Dendritic cell treated with granulocyte-macrophage colony-stimulating factor and Interleukin-4, amounts not matched to agents 40 ng/mL and 50 ng/mL, for 4 days (primary cell): ENCODE measurements at regions of chr1 and their contacts with region 1.

Region 1: GRCh38 chr1:43529206-43529731 is 1.4 kb upstream of the PTPRF start:
- H3K4me3 Mint-ChIP-seq: no peak overlapping the region
- H3K27ac Mint-ChIP-seq: no peak overlapping the region
- H3K4me1 Mint-ChIP-seq: peaks cover 13% of the 10 kb centered on the region
- H3K27me3 Mint-ChIP-seq: peaks cover 56% of the 10 kb centered on the region

Region 2: GRCh38 chr1:43423672-43424550 is 105.4 kb before region 1 on chr1:
- intact Hi-C with region 1: no loop called
- H3K4me3 Mint-ChIP-seq: no peak overlapping the region
- H3K27ac Mint-ChIP-seq: no peak overlapping the region
- H3K4me1 Mint-ChIP-seq: no peaks in the 10 kb centered on the region
- H3K27me3 Mint-ChIP-seq: no peaks in the 10 kb centered on the region

Region 3: GRCh38 chr1:43650310-43651085 is 121.2 kb after region 1 on chr1:
- intact Hi-C with region 1: loop called (anchors 10 kb)
- H3K4me3 Mint-ChIP-seq: peak overlapping the region; percentile 82
- H3K27ac Mint-ChIP-seq: peak overlapping the region; percentile 94
- H3K4me1 Mint-ChIP-seq: peaks cover 40% of the 10 kb centered on the region
- H3K27me3 Mint-ChIP-seq: no peaks in the 10 kb centered on the region

Region 4: GRCh38 chr1:43688594-43689000 is 159.3 kb after region 1 on chr1:
- intact Hi-C with region 1: no loop called
- H3K4me3 Mint-ChIP-seq: no peak overlapping the region
- H3K27ac Mint-ChIP-seq: peak overlapping the region; percentile 48
- H3K4me1 Mint-ChIP-seq: peaks cover 8% of the 10 kb centered on the region
- H3K27me3 Mint-ChIP-seq: no peaks in the 10 kb centered on the region

Region 5: DNA sequence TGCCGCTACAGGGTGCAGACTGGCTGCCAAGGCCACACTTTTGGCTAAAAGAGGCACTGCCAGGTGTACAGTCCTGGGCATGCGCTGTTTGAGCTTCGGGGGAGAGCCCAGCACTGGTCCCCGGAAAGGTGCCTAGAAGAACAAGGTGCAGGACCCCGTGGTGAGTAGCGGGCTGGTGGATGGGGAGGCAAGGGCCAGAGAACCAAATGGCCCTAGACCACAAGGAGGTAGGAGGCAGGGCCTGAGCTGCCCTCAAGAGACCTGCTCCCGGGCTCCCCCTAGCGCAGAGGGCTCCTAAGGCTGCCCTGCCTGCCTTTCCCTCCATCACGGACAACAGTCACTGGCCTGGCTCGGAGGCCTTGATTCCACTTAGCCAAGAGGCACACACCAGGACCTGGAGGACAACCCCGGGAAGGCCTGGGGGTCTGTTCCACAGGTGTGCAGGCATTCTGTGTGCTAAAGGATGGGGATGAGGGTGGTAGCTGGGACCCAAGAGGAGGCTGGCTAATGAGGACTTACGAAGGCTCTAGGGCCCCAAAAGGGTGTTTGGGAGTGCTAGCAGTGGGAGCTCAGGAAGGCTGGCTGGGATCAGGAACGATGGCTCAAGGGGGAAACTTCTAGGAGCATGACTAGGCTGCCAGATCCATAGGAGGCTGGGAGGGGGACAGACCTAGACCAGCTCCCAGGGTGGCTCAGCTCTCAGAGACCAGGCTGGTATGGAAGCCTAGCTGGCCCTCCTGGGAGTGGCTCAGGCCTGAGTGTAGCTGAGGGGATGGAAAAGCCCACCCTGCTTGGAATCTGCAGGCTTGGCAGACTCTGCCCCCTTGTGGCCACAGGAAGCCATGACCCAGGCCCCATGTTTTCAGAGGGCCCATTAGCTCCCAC is 405.1 kb after region 1 on chr1:
- intact Hi-C with region 1: loop called (anchors 2 kb)
- H3K4me3 Mint-ChIP-seq: no peak overlapping the region
- H3K27ac Mint-ChIP-seq: no peak overlapping the region
- H3K4me1 Mint-ChIP-seq: peaks cover 32% of the 10 kb centered on the region
- H3K27me3 Mint-ChIP-seq: peaks cover 27% of the 10 kb centered on the region

Region 6: GRCh38 chr1:44036409-44037139 is 507.3 kb after region 1 on chr1:
- intact Hi-C with region 1: loop called (anchors 5 kb)
- H3K4me3 Mint-ChIP-seq: no peak overlapping the region
- H3K27ac Mint-ChIP-seq: no peak overlapping the region
- H3K4me1 Mint-ChIP-seq: peaks cover 3% of the 10 kb centered on the region
- H3K27me3 Mint-ChIP-seq: peaks cover 17% of the 10 kb centered on the region

Region 7: GRCh38 chr1:44049839-44050238 is 520.6 kb after region 1 on chr1:
- intact Hi-C with region 1: loop called (anchors 5 kb)
- H3K4me3 Mint-ChIP-seq: no peak overlapping the region
- H3K27ac Mint-ChIP-seq: no peak overlapping the region
- H3K4me1 Mint-ChIP-seq: peaks cover 24% of the 10 kb centered on the region
- H3K27me3 Mint-ChIP-seq: peaks cover 1% of the 10 kb centered on the region